Left lung (tissue), 14 donors: ENCODE measurements at regions of chr20 and their contacts with region 1.

Region 1: GRCh38 chr20:49338061-49338460 is 60.2 kb upstream of the ZNFX1 start:
- DNase-seq: no peak
- ATAC-seq: no peak
- H3K4me3 ChIP-seq: no peak overlapping the region
- H3K27ac ChIP-seq: no peak overlapping the region
- H3K4me1 ChIP-seq: no peaks in the 10 kb centered on the region
- H3K27me3 ChIP-seq: peaks cover 0 to 7% of the 10 kb centered on the region in 2 donors
- CTCF ChIP-seq: no peak

Region 2: DNA sequence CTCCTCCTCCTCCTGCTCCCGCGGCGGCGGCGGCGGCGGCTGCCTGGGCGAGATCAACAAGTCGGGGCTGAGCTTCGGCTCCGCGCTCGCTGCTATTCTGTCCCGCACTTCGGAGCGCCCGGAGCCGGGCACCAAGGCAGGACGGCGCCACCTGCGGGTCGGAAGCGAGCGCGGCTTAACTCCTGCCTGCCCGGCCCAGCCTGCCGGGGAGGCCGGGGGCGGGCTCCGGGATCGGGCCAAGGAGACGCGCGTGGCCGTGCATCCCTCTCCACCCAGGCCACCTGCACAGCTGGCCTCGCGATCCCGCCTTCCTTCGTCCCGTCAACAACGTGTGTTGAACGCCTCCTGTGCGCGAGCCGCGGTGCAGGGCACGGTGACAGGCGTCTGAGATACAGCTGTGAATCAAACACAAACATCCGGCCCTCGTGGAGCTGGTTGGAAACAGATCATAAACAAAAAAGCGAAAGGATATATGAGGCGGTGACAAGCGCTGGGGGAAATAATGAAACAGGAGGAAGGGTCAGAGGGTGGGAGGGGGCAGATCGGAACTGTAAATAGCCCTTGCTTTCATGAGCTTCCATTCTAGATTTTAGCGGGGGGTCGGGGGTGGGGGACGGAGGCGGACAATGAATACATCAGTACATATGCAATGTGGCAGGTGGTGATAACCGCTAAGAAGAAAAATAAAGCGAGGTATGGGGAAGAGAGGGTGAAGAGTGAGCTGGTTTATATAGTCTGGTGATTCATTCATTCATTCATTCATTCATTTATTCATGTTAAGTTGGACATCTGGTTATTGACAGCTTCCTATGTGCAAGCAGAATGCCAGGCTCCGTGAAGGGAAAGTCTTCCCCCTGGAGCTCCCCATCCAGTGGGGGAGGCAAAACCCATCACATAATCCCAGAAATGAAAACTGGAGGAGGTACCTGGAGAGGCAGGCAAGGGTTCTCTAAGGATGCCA is 146.4 kb after region 1 on chr20:
- intact Hi-C with region 1: loop called in 1 of 2 experiments (anchors 10 kb)
- DNase-seq: peak; percentile 42 to 90 (median 68)
- ATAC-seq: peak; percentile 92
- H3K4me3 ChIP-seq: peak overlapping the region in 1 of 2 donors; percentile 24
- H3K27ac ChIP-seq: no peak overlapping the region
- H3K4me1 ChIP-seq: peaks cover 0 to 20% of the 10 kb centered on the region in 2 donors
- H3K27me3 ChIP-seq: peaks cover 32 to 97% of the 10 kb centered on the region in 2 donors
- CTCF ChIP-seq: peak; percentile 50 to 51

Region 3: GRCh38 chr20:49508435-49509199 is 170.6 kb after region 1 on chr20:
- intact Hi-C with region 1: loop called in 1 of 2 experiments (anchors 10 kb)
- DNase-seq: peak in 2 of 4 donors; percentile 13 to 49
- ATAC-seq: no peak
- H3K4me3 ChIP-seq: no peak overlapping the region
- H3K27ac ChIP-seq: no peak overlapping the region
- H3K4me1 ChIP-seq: no peaks in the 10 kb centered on the region
- H3K27me3 ChIP-seq: peaks cover 0 to 40% of the 10 kb centered on the region in 2 donors
- CTCF ChIP-seq: peak; percentile 20 to 25